ENCODE measurements at regions of chr3 and their contacts with region 1.

Region 1: DNA sequence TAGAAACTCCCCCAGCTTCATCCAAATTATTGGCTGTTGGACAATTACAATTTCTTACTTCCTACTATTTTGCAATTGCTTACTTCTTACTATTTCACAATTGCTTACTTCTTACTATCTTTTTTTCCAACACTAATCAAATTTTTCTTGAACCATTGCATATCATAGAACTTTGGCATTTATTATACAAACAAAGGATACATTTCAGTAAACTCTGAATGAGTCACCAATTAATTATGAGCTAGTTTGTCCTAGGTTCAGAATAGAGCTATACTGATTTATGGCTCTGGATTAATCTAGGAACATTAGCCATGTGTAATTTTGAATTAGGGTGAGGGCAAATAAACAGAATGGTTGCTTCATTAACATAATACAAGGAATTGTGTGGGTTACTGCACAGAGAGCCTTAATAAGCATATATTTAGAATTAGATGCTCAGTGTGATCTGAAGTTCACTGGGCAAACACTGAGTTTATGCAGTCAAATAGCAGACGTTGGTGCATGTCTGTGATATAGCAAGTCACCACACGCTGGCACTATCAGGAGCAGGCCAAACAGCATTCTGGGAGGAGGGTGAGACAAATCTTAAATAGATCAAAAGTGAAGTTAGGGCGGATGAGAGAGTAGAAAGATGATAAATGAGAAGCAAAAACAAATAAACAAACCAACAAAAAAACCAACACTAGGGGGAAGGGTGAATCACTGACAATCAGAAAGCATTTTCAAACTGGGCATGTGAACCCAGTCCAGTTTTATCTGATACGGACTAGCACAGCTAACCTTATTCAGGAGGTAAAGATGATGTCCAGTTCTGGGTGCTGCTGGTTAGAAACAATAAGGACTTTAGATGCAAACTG is 21.5 kb downstream of the GABRR3 start:
- DNase-seq: peak; percentile 33
- ATAC-seq: peak; percentile 79
- H3K4me3 ChIP-seq: no peak overlapping the region
- H3K27ac ChIP-seq: peak overlapping the region; percentile 74; the same call in 1 of the 2 replicates
- H3K4me1 ChIP-seq: peaks cover 9% of the 10 kb centered on the region; the same call in 1 of the 2 replicates
- H3K27me3 ChIP-seq: no peaks in the 10 kb centered on the region
- CTCF ChIP-seq: no peak
- POLR2A ChIP-seq: no peak
- RAD21 ChIP-seq: no peak

Region 2: GRCh38 chr3:97971677-97972567 is 41.7 kb before region 1 on chr3 and contains the start of gene RIOX2:
- CTCF ChIA-PET with region 1: no interaction called
- POLR2A ChIA-PET with region 1: no interaction called
- dilution Hi-C with region 1: no loop called
- in situ Hi-C with region 1: no loop called
- intact Hi-C with region 1: loop called (anchors 5 kb)
- DNase-seq: peak; percentile 62
- ATAC-seq: peak; percentile 96
- H3K4me3 ChIP-seq: peak within 1 kb of the TSS; percentile 82
- H3K27ac ChIP-seq: peak within 1 kb of the TSS; percentile 57
- H3K4me1 ChIP-seq: peaks cover 9% of the 10 kb centered on the region
- H3K27me3 ChIP-seq: no peaks in the 10 kb centered on the region
- CTCF ChIP-seq: no peak
- POLR2A ChIP-seq: no peak; the same call in 1 of the 2 replicates
- RAD21 ChIP-seq: no peak
- total RNA-seq, gene RIOX2: 26.7 and 27.8 TPM in 2 replicates

Measured in IMR-90 (cell line).